T-cell (primary cell): ENCODE measurements at regions of chr21 and their contacts with region 1.

Region 1: GRCh38 chr21:37496972-37497371 is 130.4 kb downstream of the DYRK1A start:
- DNase-seq: peak in 4 of 35 experiments; percentile 4 to 37 (median 6)
- ATAC-seq: no peak
- H3K4me3 ChIP-seq: no peak overlapping the region
- H3K4me3 Mint-ChIP-seq: no peak overlapping the region
- H3K27ac ChIP-seq: no peak overlapping the region
- H3K27ac Mint-ChIP-seq: peak overlapping the region in 1 of 2 donors; percentile 12
- H3K4me1 ChIP-seq: peaks cover 0 to 2% of the 10 kb centered on the region in 2 experiments
- H3K4me1 Mint-ChIP-seq: peaks cover 5 to 37% (median 28%) of the 10 kb centered on the region in 3 donors
- H3K27me3 ChIP-seq: no peaks in the 10 kb centered on the region
- H3K27me3 Mint-ChIP-seq: no peaks in the 10 kb centered on the region

Region 2: GRCh38 chr21:36241717-36242116 is 1255.3 kb before region 1 on chr21:
- CTCF ChIA-PET with region 1: no interaction called
- POLR2A ChIA-PET with region 1: interaction called in 1 of 2 experiments, 11 read pairs
- DNase-seq: no peak
- ATAC-seq: no peak
- H3K4me3 ChIP-seq: no peak overlapping the region
- H3K4me3 Mint-ChIP-seq: no peak overlapping the region
- H3K27ac ChIP-seq: no peak overlapping the region
- H3K27ac Mint-ChIP-seq: no peak overlapping the region
- H3K4me1 ChIP-seq: no peaks in the 10 kb centered on the region
- H3K4me1 Mint-ChIP-seq: peaks cover 0 to 5% (median 0%) of the 10 kb centered on the region in 3 donors
- H3K27me3 ChIP-seq: no peaks in the 10 kb centered on the region
- H3K27me3 Mint-ChIP-seq: no peaks in the 10 kb centered on the region

Region 3: GRCh38 chr21:37563641-37564340 is 66.8 kb after region 1 on chr21:
- CTCF ChIA-PET with region 1: interaction called in 1 of 2 experiments, 13 read pairs
- POLR2A ChIA-PET with region 1: no interaction called
- DNase-seq: peak; percentile 84 to 95 (median 90)
- ATAC-seq: peak; percentile 89 to 92 (median 90)
- H3K4me3 ChIP-seq: peak overlapping the region; percentile 81 to 98
- H3K4me3 Mint-ChIP-seq: peak overlapping the region; percentile 90 to 99 (median 92)
- H3K27ac ChIP-seq: peak overlapping the region; percentile 97
- H3K27ac Mint-ChIP-seq: peak overlapping the region; percentile 99 to 100
- H3K4me1 ChIP-seq: peaks cover 4 to 22% of the 10 kb centered on the region in 2 experiments
- H3K4me1 Mint-ChIP-seq: peaks cover 20 to 21% (median 21%) of the 10 kb centered on the region in 3 donors
- H3K27me3 ChIP-seq: no peaks in the 10 kb centered on the region
- H3K27me3 Mint-ChIP-seq: no peaks in the 10 kb centered on the region

Region 4: GRCh38 chr21:37675202-37675801 is 178.3 kb after region 1 on chr21:
- CTCF ChIA-PET with region 1: no interaction called
- POLR2A ChIA-PET with region 1: no interaction called
- DNase-seq: peak in 33 of 35 experiments; percentile 5 to 68 (median 37)
- ATAC-seq: peak in 1 of 4 experiments; percentile 64
- H3K4me3 ChIP-seq: no peak overlapping the region
- H3K4me3 Mint-ChIP-seq: no peak overlapping the region
- H3K27ac ChIP-seq: no peak overlapping the region
- H3K27ac Mint-ChIP-seq: no peak overlapping the region
- H3K4me1 ChIP-seq: peaks cover 0 to 8% of the 10 kb centered on the region in 2 experiments
- H3K4me1 Mint-ChIP-seq: peaks cover 0 to 2% (median 2%) of the 10 kb centered on the region in 3 donors
- H3K27me3 ChIP-seq: peaks cover 8 to 38% of the 10 kb centered on the region in 2 experiments
- H3K27me3 Mint-ChIP-seq: peaks cover 31 to 40% of the 10 kb centered on the region in 2 donors

Region 5: DNA sequence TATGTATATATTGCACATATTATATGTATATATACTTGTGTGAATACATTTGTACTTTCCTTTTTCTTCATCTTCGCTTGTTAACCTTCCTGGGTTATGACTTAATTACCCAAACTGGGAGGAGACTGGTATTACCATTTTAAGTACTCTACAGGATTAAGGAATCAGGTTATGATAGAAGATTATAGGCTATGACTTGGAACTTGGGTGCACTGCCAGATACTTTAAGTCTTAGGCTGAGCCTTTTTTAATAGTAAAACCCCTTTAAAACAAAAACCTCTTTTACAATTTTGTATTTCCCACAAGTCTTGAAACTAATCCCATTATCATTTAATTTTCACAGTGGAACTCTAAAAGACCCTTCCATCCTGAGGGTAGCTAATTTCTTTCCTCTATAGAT is 1810.5 kb after region 1 on chr21:
- CTCF ChIA-PET with region 1: no interaction called
- POLR2A ChIA-PET with region 1: interaction called in 1 of 2 experiments, 10 read pairs
- DNase-seq: no peak
- ATAC-seq: no peak
- H3K4me3 ChIP-seq: no peak overlapping the region
- H3K4me3 Mint-ChIP-seq: no peak overlapping the region
- H3K27ac ChIP-seq: no peak overlapping the region
- H3K27ac Mint-ChIP-seq: no peak overlapping the region
- H3K4me1 ChIP-seq: peaks cover 8 to 20% of the 10 kb centered on the region in 2 experiments
- H3K4me1 Mint-ChIP-seq: peaks cover 50 to 53% (median 51%) of the 10 kb centered on the region in 3 donors
- H3K27me3 ChIP-seq: no peaks in the 10 kb centered on the region
- H3K27me3 Mint-ChIP-seq: no peaks in the 10 kb centered on the region